ENCODE measurements at regions of chr11 and their contacts with region 1.

Region 1: DNA sequence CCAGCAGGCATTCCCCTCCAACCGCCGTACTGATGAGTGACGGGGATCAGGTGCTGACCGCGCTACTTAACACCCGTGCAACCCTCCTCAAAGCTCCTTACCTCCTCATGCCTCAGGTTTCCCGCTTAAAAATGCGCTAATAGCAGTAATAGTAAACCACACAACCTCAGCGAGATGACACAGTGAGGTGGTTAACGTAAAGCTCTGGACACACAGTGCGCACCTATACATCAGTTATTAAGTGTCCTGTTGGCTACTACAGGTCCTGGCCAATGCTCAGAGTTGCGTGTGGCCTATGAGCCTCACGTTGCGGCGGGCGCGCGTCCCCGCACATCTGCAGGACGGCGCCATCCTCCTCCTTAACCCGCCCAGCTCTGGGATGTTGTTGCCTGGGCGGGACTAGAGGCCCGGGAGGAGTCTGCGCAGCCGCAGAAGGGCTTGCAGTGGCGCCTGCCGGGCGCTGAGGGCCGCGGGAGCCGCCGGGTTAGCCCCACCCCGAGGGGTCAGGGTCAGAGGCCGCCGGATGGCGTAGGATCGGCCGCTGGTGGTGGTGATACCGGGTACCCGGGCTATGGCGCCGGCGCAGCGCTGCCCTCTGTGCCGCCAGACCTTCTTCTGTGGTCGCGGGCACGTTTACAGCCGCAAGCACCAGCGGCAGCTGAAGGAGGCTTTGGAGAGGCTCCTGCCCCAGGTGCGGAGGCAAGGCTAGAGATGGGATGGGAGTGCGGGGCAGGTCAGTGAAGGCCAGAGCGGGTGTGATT is at the start of gene CENATAC:
- DNase-seq: peak; percentile 98
- ATAC-seq: peak; percentile 93
- H3K4me3 Mint-ChIP-seq: peak within 1 kb of the TSS; percentile 88
- H3K27ac Mint-ChIP-seq: peak within 1 kb of the TSS; percentile 98
- H3K4me1 Mint-ChIP-seq: peaks cover 32% of the 10 kb centered on the region
- H3K27me3 Mint-ChIP-seq: no peaks in the 10 kb centered on the region
- total RNA-seq, gene CENATAC: 23.7 to 26.2 TPM

Region 2: GRCh38 chr11:118975771-118976709 is 21.8 kb before region 1 on chr11:
- CTCF ChIA-PET with region 1: no interaction called
- POLR2A ChIA-PET with region 1: no interaction called
- intact Hi-C with region 1: no loop called
- DNase-seq: no peak
- ATAC-seq: no peak
- H3K4me3 Mint-ChIP-seq: no peak overlapping the region
- H3K27ac Mint-ChIP-seq: no peak overlapping the region
- H3K4me1 Mint-ChIP-seq: no peaks in the 10 kb centered on the region
- H3K27me3 Mint-ChIP-seq: peaks cover 14% of the 10 kb centered on the region

Region 3: GRCh38 chr11:119030329-119031049 is 32.7 kb after region 1 on chr11 and contains the start of gene SLC37A4:
- CTCF ChIA-PET with region 1: interaction called, 6 read pairs
- POLR2A ChIA-PET with region 1: no interaction called
- intact Hi-C with region 1: loop called (anchors 1 kb)
- DNase-seq: peak; percentile 99
- ATAC-seq: peak; percentile 94
- H3K4me3 Mint-ChIP-seq: peak within 1 kb of the TSS; percentile 76
- H3K27ac Mint-ChIP-seq: peak within 1 kb of the TSS; percentile 86
- H3K4me1 Mint-ChIP-seq: peaks cover 19% of the 10 kb centered on the region
- H3K27me3 Mint-ChIP-seq: no peaks in the 10 kb centered on the region
- total RNA-seq, gene SLC37A4: 26.2 to 36.2 TPM

Region 4: GRCh38 chr11:119101759-119102423 is 104.1 kb after region 1 on chr11 and contains the start of gene DPAGT1:
- CTCF ChIA-PET with region 1: no interaction called
- POLR2A ChIA-PET with region 1: interaction called, 3 read pairs
- intact Hi-C with region 1: loop called in 1 of 2 experiments (anchors 1 kb)
- DNase-seq: peak; percentile 93
- ATAC-seq: peak; percentile 86
- H3K4me3 Mint-ChIP-seq: peak within 1 kb of the TSS; percentile 95
- H3K27ac Mint-ChIP-seq: peak within 1 kb of the TSS; percentile 100
- H3K4me1 Mint-ChIP-seq: peaks cover 42% of the 10 kb centered on the region
- H3K27me3 Mint-ChIP-seq: no peaks in the 10 kb centered on the region
- total RNA-seq, gene DPAGT1: 57.8 to 73.5 TPM